ENCODE measurements at regions of chrX and their contacts with region 1.

Region 1: DNA sequence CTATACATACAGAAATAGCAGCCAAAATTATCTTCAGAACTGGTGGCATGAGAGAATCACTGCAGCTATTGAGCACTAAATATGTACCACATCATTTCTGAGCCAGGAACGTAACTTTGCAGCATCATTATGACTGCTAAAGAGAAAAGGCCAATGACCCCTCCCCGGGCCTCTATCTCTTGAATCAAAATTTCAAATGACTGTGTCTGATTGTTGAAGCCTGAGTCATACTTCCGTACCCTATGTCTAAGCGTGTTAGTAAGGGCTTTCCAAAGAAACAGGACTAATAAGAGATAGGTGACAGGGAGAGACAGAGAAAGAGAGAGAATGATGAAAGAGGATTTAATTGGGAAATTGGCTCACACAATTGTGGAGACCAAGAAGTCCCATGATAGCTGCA is 445.5 kb upstream of the SPANXN1 start:
- DNase-seq: no peak
- ATAC-seq: no peak
- H3K4me3 ChIP-seq: no peak overlapping the region
- H3K27ac ChIP-seq: no peak overlapping the region
- H3K4me1 ChIP-seq: no peaks in the 10 kb centered on the region
- H3K27me3 ChIP-seq: no peaks in the 10 kb centered on the region
- CTCF ChIP-seq: no peak
- POLR2A ChIP-seq: no peak

Region 2: GRCh38 chrX:144566592-144566991 is 235.2 kb before region 1 on chrX:
- in situ Hi-C with region 1: no loop called
- intact Hi-C with region 1: no loop called
- DNase-seq: no peak
- ATAC-seq: no peak
- H3K4me3 ChIP-seq: no peak overlapping the region
- H3K27ac ChIP-seq: no peak overlapping the region
- H3K4me1 ChIP-seq: no peaks in the 10 kb centered on the region
- H3K27me3 ChIP-seq: no peaks in the 10 kb centered on the region
- CTCF ChIP-seq: no peak
- POLR2A ChIP-seq: no peak

Region 3: DNA sequence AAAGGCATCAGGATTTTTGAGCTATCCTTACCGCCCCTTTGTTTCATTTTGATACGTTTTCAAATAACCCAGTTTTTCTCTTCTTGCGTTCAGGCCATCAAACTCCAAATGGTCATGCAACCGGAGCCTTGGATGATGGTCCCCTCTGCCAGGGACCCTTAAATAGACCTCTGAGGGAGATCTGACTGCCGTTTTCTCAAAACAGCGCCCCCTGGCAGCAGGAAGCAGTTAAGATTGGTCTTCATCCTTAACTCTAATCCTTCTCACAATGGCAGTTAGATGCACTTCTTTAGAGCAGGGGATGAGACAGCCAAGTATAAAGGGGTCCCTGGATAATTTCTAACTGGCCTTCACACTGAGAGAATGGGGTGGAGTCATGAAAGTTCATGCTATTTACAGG is 79.5 kb before region 1 on chrX:
- in situ Hi-C with region 1: loop called in 1 of 4 experiments (anchors 25 kb)
- intact Hi-C with region 1: no loop called
- DNase-seq: no peak
- ATAC-seq: no peak
- H3K4me3 ChIP-seq: no peak overlapping the region
- H3K27ac ChIP-seq: no peak overlapping the region
- H3K4me1 ChIP-seq: no peaks in the 10 kb centered on the region
- H3K27me3 ChIP-seq: no peaks in the 10 kb centered on the region
- CTCF ChIP-seq: no peak
- POLR2A ChIP-seq: no peak